ENCODE measurements at regions of chr1 and their contacts with region 1.

Region 1: GRCh38 chr1:92291372-92291999 is 7.3 kb downstream of the GLMN start:
- DNase-seq: no peak
- H3K4me3 ChIP-seq: no peak overlapping the region
- H3K27me3 ChIP-seq: no peaks in the 10 kb centered on the region
- CTCF ChIP-seq: peak; percentile 79

Region 2: GRCh38 chr1:91997607-91998195 is 293.8 kb before region 1 on chr1:
- CTCF ChIA-PET with region 1: interaction called, 43 read pairs
- POLR2A ChIA-PET with region 1: no interaction called
- DNase-seq: no peak
- H3K4me3 ChIP-seq: no peak overlapping the region
- H3K27me3 ChIP-seq: no peaks in the 10 kb centered on the region
- CTCF ChIP-seq: peak; percentile 56

Measured in BJ (cell line).